Calu3 (cell line): ENCODE measurements at regions of chr5 and their contacts with region 1.

Region 1: DNA sequence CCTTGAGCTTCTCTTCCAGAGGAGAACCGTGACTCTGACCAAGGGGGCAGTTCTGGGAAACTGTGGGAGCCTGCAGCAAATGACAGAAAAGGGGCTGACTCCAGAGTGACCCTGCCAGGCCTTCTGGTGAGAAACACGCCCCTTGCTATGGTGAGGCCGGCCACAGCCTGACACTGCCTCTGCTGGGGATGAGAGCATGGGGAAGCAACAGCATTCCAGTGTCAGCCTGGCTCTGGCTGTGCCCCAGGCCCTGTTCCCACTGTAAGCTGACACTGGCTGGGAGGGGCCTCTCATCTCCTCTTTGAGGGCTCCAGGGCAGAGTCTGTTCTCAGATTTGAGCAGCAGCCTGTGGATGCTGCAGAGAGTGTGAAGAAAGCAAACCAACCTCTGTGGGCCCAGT is 180.0 kb upstream of the IL12B start:
- DNase-seq: peak; percentile 14
- H3K4me3 Mint-ChIP-seq: no peak overlapping the region
- H3K27ac Mint-ChIP-seq: no peak overlapping the region
- H3K4me1 Mint-ChIP-seq: peaks cover 13% of the 10 kb centered on the region
- H3K27me3 Mint-ChIP-seq: no peaks in the 10 kb centered on the region
- CTCF ChIP-seq: no peak

Region 2: DNA sequence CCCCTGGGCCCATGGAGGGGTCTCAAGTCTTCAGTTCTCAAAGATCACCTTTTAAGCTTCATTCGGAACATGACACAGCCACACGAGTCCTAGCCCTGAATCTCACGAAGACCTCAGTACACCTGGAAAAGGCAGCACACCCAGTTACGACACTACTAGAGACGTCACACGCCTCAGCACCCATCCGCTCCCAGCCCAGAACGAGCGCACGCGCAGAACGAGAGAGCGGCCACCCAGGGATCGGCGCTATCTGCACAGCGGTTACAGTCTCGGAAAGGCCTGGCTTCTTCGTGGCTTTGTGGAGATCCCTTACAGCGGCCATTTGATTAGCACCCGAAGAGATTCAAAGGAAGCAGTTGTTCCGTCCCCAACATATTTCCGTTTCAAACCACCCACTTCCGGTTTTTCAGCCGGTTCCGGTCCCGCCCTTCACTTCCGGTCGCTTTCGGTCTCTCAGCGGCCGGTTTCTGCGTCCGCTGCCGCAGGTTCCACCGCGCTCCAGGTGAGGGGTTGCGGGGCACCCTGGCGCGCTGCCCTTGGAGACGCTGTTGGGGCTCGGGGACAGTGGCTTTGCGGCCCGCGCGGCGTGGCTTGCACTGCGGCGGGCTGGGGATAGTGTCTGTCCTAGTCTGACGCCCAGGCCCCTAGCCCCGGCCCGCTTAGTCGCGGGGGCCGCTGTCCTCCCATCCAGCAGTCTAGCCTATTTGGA is 247.3 kb before region 1 on chr5 and contains the start of gene UBLCP1:
- CTCF ChIA-PET with region 1: no interaction called
- intact Hi-C with region 1: no loop called
- DNase-seq: peak; percentile 84
- H3K4me3 Mint-ChIP-seq: peak within 1 kb of the TSS; percentile 84
- H3K27ac Mint-ChIP-seq: peak within 1 kb of the TSS; percentile 92
- H3K4me1 Mint-ChIP-seq: peaks cover 9% of the 10 kb centered on the region
- H3K27me3 Mint-ChIP-seq: no peaks in the 10 kb centered on the region
- CTCF ChIP-seq: no peak
- total RNA-seq, gene UBLCP1: 35.8 and 39.5 TPM in 2 replicates

Region 3: DNA sequence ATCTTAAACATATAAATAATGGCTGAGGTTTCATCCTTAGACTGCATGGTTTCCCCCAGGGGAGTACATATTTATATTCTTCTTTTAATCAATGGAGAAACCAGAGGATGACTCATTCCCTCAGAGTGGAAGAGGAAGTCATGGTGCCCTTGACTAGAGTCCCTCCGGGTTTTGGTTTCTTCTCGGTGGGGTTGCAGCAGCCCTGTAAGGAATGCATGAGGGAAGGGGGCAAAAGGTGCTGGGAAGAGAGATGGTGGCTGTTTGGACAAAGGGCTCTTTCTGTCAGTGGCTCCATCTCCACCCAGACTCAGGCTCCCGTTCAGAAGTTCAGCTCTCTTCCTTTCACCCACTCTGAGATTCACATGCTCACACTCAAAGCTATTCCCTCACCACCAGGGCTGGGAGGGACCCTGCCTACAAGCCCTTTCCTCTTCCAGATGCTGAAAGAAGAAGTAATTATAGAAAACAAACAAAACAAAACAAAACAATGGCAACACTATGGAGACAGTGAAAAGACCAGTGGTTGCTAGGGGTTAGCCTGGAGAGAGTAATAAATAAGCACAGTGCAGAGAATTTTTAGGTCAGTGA is 50.2 kb before region 1 on chr5:
- CTCF ChIA-PET with region 1: no interaction called
- intact Hi-C with region 1: loop called (anchors 5 kb)
- DNase-seq: peak; percentile 30
- H3K4me3 Mint-ChIP-seq: no peak overlapping the region
- H3K27ac Mint-ChIP-seq: peak overlapping the region; percentile 67
- H3K4me1 Mint-ChIP-seq: peaks cover 38% of the 10 kb centered on the region
- H3K27me3 Mint-ChIP-seq: no peaks in the 10 kb centered on the region
- CTCF ChIP-seq: no peak

Region 4: GRCh38 chr5:160030631-160031377 is 520.5 kb after region 1 on chr5:
- CTCF ChIA-PET with region 1: no interaction called
- intact Hi-C with region 1: no loop called
- DNase-seq: no peak
- H3K4me3 Mint-ChIP-seq: no peak overlapping the region
- H3K27ac Mint-ChIP-seq: no peak overlapping the region
- H3K4me1 Mint-ChIP-seq: no peaks in the 10 kb centered on the region
- H3K27me3 Mint-ChIP-seq: no peaks in the 10 kb centered on the region
- CTCF ChIP-seq: no peak